ENCODE measurements at regions of chr5 and their contacts with region 1.

Region 1: DNA sequence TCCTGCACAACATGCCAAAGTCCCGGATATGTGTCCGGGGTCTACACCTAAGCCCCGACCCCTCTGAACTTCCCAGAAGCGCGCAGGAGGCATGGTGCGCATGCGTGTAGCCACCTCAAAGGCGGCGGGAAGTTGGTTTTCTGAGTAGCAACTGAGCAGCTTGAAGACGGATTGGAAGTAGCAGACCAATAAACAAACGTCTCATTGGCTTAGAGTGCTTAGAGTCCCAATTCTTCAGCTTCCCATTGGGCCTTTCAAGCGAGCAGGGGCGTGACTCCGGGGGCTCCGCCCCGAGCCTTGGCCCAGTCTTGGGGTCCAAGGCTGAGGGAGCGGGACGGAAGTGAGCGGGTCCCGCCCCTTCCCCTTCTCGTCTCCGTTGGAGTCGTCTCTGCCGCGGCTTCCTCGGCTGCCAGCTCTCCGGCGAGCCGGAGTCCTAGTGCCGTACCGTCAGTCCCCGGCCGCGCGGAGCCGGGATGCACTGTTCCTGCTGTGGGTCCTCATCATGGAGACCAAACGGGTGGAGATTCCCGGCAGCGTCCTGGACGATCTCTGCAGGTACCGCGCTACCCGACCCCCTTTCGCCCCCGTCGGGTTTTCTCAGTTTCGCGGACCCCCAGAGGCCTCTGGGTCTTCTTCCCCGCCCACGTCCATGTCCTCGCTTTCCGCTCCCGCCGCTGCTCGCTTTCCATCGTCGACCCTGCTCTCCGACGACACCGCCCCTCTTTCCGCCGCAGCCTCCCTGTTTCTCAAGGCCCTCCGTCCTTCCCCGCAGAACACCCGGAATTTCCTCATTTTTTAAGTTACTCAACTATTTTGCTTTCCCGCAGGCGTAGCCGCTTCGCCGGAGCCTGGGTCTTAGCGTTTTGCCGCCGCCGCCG is at the start of gene DCP2:
- DNase-seq: peak; percentile 98 to 100 (median 98)
- H3K4me3 ChIP-seq: peak within 1 kb of the TSS; percentile 48 to 91 (median 70)
- H3K4me3 Mint-ChIP-seq: peak within 1 kb of the TSS; percentile 95 to 100
- H3K27ac ChIP-seq: peak within 1 kb of the TSS; percentile 87 to 91
- H3K27ac Mint-ChIP-seq: peak within 1 kb of the TSS; percentile 96 to 99 (median 97)
- H3K4me1 ChIP-seq: peaks cover 15 to 34% of the 10 kb centered on the region in 2 donors
- H3K4me1 Mint-ChIP-seq: peaks cover 42% of the 10 kb centered on the region
- H3K27me3 ChIP-seq: no peaks in the 10 kb centered on the region
- H3K27me3 Mint-ChIP-seq: peaks cover 0 to 4% (median 0%) of the 10 kb centered on the region in 3 donors
- CTCF ChIP-seq: no peak
- polyA plus RNA-seq, gene DCP2: 24.0 to 62.2 (median 58.9) TPM

Region 2: GRCh38 chr5:112419986-112420864 is 556.4 kb before region 1 on chr5:
- intact Hi-C with region 1: no loop called
- DNase-seq: peak; percentile 6 to 17 (median 13)
- H3K4me3 ChIP-seq: peak overlapping the region; percentile 21 to 75 (median 39)
- H3K4me3 Mint-ChIP-seq: peak overlapping the region; percentile 70 to 79
- H3K27ac ChIP-seq: no peak overlapping the region
- H3K27ac Mint-ChIP-seq: no peak overlapping the region
- H3K4me1 ChIP-seq: peaks cover 20 to 26% of the 10 kb centered on the region in 2 donors
- H3K4me1 Mint-ChIP-seq: peaks cover 18% of the 10 kb centered on the region
- H3K27me3 ChIP-seq: peaks cover 55 to 76% of the 10 kb centered on the region in 2 donors
- H3K27me3 Mint-ChIP-seq: peaks cover 54 to 79% (median 59%) of the 10 kb centered on the region in 3 donors
- CTCF ChIP-seq: peak; percentile 48

Region 3: DNA sequence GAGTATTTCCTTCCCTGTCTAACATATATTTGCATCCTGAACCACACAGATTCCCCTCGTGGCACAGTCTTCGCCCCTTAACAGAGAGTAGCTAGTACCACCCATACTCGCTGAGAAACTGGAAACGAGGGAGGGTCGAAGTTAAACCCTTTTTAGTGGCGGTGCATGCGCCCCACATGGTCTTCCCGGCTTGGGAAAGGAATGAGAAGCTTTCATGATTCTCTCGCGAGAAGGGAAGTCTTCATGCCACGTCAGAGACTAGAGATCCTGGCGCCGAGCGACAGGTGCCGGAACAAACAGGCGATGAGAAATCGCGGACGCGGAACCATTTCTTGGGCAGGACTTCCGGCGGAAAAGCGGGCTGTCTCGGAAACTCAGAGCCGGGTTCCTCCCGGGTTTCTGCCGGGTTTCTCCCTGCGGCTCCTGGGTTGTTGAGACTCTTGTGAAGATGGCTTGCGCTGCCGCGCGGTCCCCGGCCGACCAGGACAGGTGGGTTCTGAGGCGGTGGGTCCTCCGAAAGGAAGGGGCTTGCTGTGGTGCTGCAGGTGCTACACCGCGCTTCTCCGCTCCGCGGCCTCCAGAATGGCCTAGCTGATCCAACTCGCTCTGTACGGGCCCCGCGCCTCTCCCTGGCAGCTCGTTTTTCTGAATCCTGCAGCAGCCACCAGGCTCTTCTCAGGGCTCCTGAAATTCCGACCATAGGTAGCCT is 115.6 kb before region 1 on chr5 and contains the start of gene SRP19:
- intact Hi-C with region 1: loop called in 1 of 2 experiments (anchors 5 kb)
- DNase-seq: peak; percentile 91 to 98 (median 95)
- H3K4me3 ChIP-seq: peak within 1 kb of the TSS; percentile 92 to 96 (median 95)
- H3K4me3 Mint-ChIP-seq: peak within 1 kb of the TSS; percentile 94 to 95
- H3K27ac ChIP-seq: peak within 1 kb of the TSS; percentile 89 to 92
- H3K27ac Mint-ChIP-seq: peak within 1 kb of the TSS; percentile 92 to 97 (median 95)
- H3K4me1 ChIP-seq: peaks cover 12 to 20% of the 10 kb centered on the region in 2 donors
- H3K4me1 Mint-ChIP-seq: peaks cover 29% of the 10 kb centered on the region
- H3K27me3 ChIP-seq: peaks cover 7 to 13% of the 10 kb centered on the region in 2 donors
- H3K27me3 Mint-ChIP-seq: peaks cover 3 to 9% (median 8%) of the 10 kb centered on the region in 3 donors
- CTCF ChIP-seq: no peak
- polyA plus RNA-seq, gene SRP19: 18.6 to 87.4 (median 71.9) TPM